CD4-positive, alpha-beta T cell (primary cell): ENCODE measurements at regions of chr1 and their contacts with region 1.

Region 1: DNA sequence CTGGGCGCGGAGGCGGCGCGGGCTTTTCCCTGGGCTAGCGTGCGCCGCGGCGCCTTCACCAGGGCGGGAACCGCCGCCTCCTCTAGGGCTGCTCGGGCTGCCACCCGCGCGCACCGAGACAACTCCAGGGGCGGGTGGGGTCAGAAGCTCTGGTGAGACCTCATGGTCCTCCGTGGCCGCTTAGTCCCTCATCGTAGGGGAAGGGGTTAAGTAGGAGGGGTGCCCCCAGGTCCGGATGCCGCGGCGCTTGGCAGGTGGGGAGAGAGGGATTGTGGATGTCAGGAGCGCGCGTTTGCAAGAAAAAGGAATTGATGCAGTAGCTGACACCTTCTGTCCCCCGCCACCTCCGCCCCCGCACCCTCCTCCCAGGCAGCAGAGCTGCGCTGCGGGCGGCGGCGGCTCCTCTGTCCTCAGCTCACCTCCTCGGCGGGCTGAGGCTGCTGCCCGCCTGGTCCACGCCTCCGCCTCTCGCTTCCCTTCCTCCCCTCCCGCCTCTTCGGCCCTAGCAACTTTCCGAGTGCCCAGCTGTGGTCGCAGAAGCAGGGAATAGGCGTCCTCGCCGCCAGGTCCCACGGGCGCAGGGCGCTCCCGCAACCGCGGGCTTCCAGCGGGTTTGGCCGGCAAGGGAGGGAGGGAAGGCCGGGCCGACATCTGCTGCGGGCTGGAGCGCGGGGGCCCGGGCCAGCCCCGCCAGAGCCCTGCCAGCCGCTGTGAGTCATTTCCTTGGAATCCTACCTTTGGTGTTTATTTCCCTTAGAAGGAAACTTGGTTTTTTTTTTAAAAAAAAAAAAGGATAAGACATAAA is 822 bp downstream of the SERTAD4 start:
- DNase-seq: peak in 1 of 14 experiments; percentile 8
- ATAC-seq: no peak
- H3K4me3 ChIP-seq: no peak overlapping the region
- H3K4me3 Mint-ChIP-seq: no peak overlapping the region
- H3K27ac ChIP-seq: no peak overlapping the region
- H3K27ac Mint-ChIP-seq: no peak overlapping the region
- H3K4me1 ChIP-seq: peaks cover 16% of the 10 kb centered on the region
- H3K4me1 Mint-ChIP-seq: peaks cover 13% of the 10 kb centered on the region
- H3K27me3 ChIP-seq: peaks cover 40 to 67% of the 10 kb centered on the region in 2 experiments
- H3K27me3 Mint-ChIP-seq: peaks cover 64% of the 10 kb centered on the region
- CTCF ChIP-seq: no peak

Region 2: DNA sequence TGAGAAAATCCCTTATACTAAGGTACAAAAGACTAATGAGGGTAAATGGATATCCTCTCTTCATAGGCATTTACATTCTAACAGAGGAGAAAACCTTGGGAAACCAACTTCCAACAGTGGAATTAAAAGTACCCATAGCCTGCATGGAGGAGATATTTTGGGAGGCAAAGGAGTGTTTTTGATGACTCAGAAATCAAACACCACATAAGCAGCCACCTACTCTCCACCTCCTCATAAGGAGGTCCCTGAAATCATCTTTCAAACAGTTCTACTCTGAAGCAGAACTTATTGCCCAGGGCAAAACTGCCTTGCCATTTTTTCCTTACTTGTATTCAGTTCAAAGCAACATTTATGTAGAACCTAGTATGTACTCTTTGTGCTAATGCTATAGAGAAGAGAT is 689.2 kb after region 1 on chr1:
- CTCF ChIA-PET with region 1: no interaction called
- POLR2A ChIA-PET with region 1: no interaction called
- intact Hi-C with region 1: loop called in 1 of 2 experiments (anchors 10 kb)
- DNase-seq: no peak
- ATAC-seq: no peak
- H3K4me3 ChIP-seq: no peak overlapping the region
- H3K4me3 Mint-ChIP-seq: no peak overlapping the region
- H3K27ac ChIP-seq: no peak overlapping the region
- H3K27ac Mint-ChIP-seq: no peak overlapping the region
- H3K4me1 ChIP-seq: no peaks in the 10 kb centered on the region
- H3K4me1 Mint-ChIP-seq: no peaks in the 10 kb centered on the region
- H3K27me3 ChIP-seq: peaks cover 0 to 3% of the 10 kb centered on the region in 2 experiments
- H3K27me3 Mint-ChIP-seq: peaks cover 24% of the 10 kb centered on the region
- CTCF ChIP-seq: no peak